Astrocyte of the cerebellum (primary cell): ENCODE measurements at regions of chr17 and their contacts with region 1.

Region 1: DNA sequence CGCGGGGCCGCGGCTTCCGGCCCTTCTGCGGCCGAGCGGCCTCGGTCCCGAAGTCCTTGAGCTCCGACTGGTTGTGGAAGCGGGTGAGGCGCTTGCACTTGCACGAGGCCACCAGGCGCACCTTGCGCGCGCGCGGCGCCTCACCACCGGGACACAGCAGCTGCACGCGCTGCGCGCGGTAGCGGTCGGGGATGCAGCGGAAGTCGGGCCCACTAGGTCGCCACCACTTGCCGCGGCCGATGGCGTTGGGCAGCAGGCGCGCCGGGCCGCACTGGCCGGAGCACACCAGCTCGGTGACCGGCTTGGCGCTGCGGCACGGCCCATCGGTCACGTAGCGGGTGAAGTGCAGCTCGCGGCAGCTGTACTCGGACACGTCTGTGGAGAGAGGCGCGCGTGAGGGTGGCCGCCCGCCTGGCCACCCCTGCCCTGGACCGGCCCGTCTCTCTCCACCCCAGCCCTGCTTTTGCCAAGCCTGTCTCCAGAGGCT is 3.2 kb downstream of the SOST start:
- DNase-seq: no peak
- H3K4me3 ChIP-seq: no peak overlapping the region
- CTCF ChIP-seq: no peak

Region 2: GRCh38 chr17:43579566-43580140 is 175.8 kb before region 1 on chr17:
- in situ Hi-C with region 1: loop called (anchors 10 kb)
- DNase-seq: peak; percentile 74
- H3K4me3 ChIP-seq: no peak overlapping the region
- CTCF ChIP-seq: no peak

Region 3: GRCh38 chr17:43695970-43696865 is 59.2 kb before region 1 on chr17:
- in situ Hi-C with region 1: loop called (anchors 5 kb)
- DNase-seq: no peak
- H3K4me3 ChIP-seq: no peak overlapping the region
- CTCF ChIP-seq: no peak